HCT116 (cell line): ENCODE measurements at regions of chr17 and their contacts with region 1.

Region 1: GRCh38 chr17:82767041-82767754 is 15.3 kb downstream of the TBCD start:
- DNase-seq: no peak
- ATAC-seq: peak; percentile 86
- H3K4me3 ChIP-seq: no peak overlapping the region
- H3K27ac ChIP-seq: no peak overlapping the region
- H3K4me1 ChIP-seq: no peaks in the 10 kb centered on the region
- H3K27me3 ChIP-seq: no peaks in the 10 kb centered on the region
- CTCF ChIP-seq: peak; percentile 81 to 85 (median 82)
- POLR2A ChIP-seq: no peak
- RAD21 ChIP-seq: peak; percentile 93

Region 2: GRCh38 chr17:82351716-82352488 is 415.3 kb before region 1 on chr17:
- CTCF ChIA-PET with region 1: no interaction called
- POLR2A ChIA-PET with region 1: no interaction called
- RAD21 ChIA-PET with region 1: no interaction called
- intact Hi-C with region 1: loop called (anchors 5 kb)
- DNase-seq: peak; percentile 91
- ATAC-seq: peak; percentile 92
- H3K4me3 ChIP-seq: no peak overlapping the region
- H3K27ac ChIP-seq: no peak overlapping the region
- H3K4me1 ChIP-seq: peaks cover 2 to 19% of the 10 kb centered on the region in 2 experiments; a peak in 3 of 4 replicates
- H3K27me3 ChIP-seq: no peaks in the 10 kb centered on the region
- CTCF ChIP-seq: peak; percentile 97 to 99 (median 98)
- POLR2A ChIP-seq: no peak
- RAD21 ChIP-seq: peak; percentile 100

Region 3: GRCh38 chr17:82668631-82669099 is 98.5 kb before region 1 on chr17:
- CTCF ChIA-PET with region 1: interaction called, 4 read pairs
- POLR2A ChIA-PET with region 1: no interaction called
- RAD21 ChIA-PET with region 1: interaction called in 1 of 2 experiments, 3 read pairs
- intact Hi-C with region 1: loop called (anchors 1 kb)
- DNase-seq: peak; percentile 43
- ATAC-seq: peak; percentile 97
- H3K4me3 ChIP-seq: peak overlapping the region; percentile 35 to 37
- H3K27ac ChIP-seq: peak overlapping the region; percentile 33; the same call in 1 of the 2 replicates
- H3K4me1 ChIP-seq: peaks cover 0 to 8% of the 10 kb centered on the region in 2 experiments; a peak in 1 of 4 replicates
- H3K27me3 ChIP-seq: no peaks in the 10 kb centered on the region
- CTCF ChIP-seq: peak; percentile 71 to 73 (median 72)
- POLR2A ChIP-seq: peak; percentile 63
- RAD21 ChIP-seq: peak; percentile 84